PC-3 (cell line): ENCODE measurements at regions of chr14 and their contacts with region 1.

Region 1: GRCh38 chr14:51006781-51007211 is 62.5 kb upstream of the PYGL start:
- DNase-seq: peak; percentile 86
- ATAC-seq: peak; percentile 77
- H3K4me3 ChIP-seq: peak overlapping the region; percentile 6; the same call in 1 of the 2 replicates
- H3K27ac ChIP-seq: peak overlapping the region; percentile 75
- H3K4me1 ChIP-seq: peaks cover 45% of the 10 kb centered on the region
- H3K27me3 ChIP-seq: no peaks in the 10 kb centered on the region
- CTCF ChIP-seq: no peak

Region 2: DNA sequence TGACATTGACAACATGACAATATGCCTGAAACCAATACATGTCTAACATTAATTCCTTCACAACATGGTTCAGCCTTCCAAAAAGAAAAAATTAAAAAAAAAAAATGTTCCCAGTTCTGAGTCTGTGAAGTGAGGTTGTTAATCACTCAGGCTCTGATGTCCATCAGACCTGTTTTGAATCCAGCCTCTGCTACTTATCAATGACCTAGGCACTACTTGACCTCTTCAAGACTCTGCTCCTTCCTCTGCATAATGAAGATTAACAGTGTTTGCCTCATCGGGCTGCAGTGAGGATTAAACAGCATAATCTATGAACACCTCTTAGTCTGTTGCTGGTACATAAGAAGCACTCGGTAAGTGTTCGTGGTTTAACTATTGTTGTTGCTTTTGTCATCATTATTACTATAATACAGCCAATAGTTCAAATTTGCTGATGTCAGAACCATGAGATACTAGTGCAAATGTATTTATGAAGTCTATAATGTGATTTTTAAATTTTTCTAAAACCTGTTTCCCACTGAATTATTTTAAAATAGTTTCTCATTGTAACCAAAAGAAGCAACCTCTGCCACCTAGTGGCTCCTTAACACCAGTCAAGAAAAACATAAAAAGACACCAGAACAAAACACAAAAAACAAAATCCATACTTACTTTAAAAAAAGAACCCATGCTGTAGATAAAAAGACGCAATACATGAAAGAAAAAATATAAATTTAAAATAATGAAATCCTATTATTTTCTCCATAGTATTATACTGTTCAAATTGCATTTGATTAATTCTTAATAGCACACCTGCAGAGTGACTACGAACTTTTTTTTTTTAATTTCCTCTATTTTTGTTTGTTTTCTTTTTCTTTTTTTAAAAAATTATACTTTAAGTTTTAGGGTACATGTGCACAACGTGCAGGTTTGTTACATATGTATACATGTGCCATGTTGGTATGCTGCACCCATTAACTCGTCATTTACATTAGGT is 213.0 kb after region 1 on chr14:
- CTCF ChIA-PET with region 1: no interaction called
- POLR2A ChIA-PET with region 1: no interaction called
- intact Hi-C with region 1: loop called (anchors 5 kb)
- DNase-seq: peak; percentile 63
- ATAC-seq: peak; percentile 65
- H3K4me3 ChIP-seq: no peak overlapping the region
- H3K27ac ChIP-seq: no peak overlapping the region
- H3K4me1 ChIP-seq: no peaks in the 10 kb centered on the region
- H3K27me3 ChIP-seq: no peaks in the 10 kb centered on the region
- CTCF ChIP-seq: peak; percentile 90